Posterior cingulate gyrus (tissue), 11 donors: ENCODE measurements at regions of chr12 and their contacts with region 1.

Region 1: DNA sequence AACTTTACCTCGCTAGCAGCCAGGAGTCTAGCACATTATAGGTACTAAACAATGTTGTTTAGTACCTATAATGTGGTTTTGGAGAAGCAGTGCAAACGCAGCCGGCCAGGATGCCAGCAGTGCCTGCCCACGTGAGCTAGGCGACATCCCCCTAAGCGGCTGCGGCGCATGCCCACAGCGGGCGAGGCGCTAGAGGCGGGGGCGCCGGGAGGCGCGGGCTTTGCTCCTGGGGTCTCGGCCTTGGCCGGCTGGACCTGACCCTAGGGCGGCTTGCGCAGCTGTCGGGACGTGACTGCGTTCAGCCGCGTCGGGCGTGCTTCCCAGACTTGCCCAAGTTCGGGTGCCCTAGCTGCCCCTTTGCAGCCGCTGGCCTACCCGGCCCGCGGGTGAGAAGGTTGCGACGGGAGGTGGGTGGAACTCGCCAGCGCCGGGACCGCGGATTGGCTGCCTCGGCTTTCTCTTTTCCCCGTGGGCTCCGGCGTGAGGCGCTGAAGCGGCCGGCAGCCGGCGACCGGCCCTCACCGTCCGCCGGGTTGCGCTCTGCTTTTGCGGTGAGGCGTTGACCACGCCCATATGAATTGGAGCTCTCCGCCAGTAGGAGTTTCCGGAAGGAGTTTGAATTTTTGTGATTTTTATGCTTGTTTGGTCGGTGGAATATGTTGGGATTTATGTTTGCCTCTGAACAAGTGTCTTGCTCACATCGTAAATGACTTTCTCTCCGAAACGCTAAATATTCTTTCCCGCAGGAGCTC is at the start of gene TMEM19:
- DNase-seq: peak; percentile 82 to 98 (median 89)

Region 2: DNA sequence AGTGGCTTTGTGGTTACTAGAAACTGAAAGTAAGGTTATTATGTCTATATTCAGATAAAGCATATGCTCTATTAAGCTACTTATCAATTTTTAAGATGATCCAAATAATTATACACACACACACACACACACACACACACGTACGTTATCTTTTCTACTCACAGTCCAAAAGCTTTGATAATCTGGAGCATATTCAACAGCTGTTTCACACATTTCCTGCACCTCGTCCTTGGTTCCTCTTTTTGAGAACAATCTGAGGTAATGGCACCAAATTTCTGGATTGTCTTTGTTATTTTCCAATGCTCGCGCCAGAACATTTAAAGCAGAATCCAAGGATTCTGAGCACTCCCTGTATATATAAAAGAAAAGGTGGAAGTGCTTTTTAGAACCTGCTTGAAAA is 60.0 kb before region 1 on chr12:
- intact Hi-C with region 1: no loop called
- DNase-seq: no peak

Region 3: DNA sequence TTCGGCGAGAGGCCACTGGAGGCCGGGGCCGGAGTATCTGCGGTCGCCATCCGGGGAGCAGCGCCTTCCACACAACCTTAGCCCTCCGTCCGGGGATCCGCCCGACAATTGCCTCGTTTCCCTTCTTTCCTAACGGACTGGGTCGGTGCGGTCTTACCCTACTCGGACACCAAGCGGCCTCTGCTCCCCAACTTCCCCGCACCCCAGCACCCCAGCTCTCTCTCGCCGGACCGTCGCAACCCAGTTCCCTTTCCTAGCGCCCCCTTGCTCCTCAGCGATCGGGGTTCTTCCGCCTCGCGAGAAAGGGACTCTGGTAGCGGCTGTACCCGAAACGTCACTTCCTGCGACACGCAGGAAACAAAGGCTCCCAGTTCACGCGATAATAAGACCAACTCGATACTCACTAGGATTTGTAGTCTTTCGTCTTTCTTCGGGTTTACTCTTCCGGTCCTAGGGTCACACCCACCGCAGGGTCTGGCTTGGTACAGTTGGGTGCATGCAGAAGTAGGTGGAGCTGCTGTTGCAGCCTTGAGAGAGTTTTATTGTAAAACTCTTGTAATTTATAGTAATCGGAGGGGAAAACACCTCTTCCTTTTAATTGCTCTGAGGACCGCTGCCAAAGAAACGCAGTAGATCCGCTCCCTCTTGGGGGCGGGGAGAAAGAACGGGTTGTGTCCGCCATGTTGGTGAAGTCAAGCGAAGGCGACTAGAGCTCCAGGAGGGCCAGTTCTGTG is 22.4 kb before region 1 on chr12 and contains the start of gene ZFC3H1:
- intact Hi-C with region 1: loop called (anchors 1 kb)
- DNase-seq: peak; percentile 94 to 99 (median 96)

Region 4: GRCh38 chr12:71754461-71755145 is 68.5 kb after region 1 on chr12 and contains the start of gene RAB21:
- intact Hi-C with region 1: loop called (anchors 2 kb)
- DNase-seq: peak; percentile 96 to 100 (median 99)